ENCODE measurements at regions of chr5 and their contacts with region 1.

Region 1: GRCh38 chr5:143403593-143404415 is at the start of gene NR3C1:
- DNase-seq: peak; percentile 89
- ATAC-seq: peak; percentile 58
- H3K4me3 Mint-ChIP-seq: peak within 1 kb of the TSS; percentile 91
- H3K27ac Mint-ChIP-seq: peak within 1 kb of the TSS; percentile 97
- H3K4me1 Mint-ChIP-seq: peaks cover 41% of the 10 kb centered on the region
- H3K27me3 Mint-ChIP-seq: no peaks in the 10 kb centered on the region
- total RNA-seq, gene NR3C1: 47.1 to 53.9 TPM

Region 2: DNA sequence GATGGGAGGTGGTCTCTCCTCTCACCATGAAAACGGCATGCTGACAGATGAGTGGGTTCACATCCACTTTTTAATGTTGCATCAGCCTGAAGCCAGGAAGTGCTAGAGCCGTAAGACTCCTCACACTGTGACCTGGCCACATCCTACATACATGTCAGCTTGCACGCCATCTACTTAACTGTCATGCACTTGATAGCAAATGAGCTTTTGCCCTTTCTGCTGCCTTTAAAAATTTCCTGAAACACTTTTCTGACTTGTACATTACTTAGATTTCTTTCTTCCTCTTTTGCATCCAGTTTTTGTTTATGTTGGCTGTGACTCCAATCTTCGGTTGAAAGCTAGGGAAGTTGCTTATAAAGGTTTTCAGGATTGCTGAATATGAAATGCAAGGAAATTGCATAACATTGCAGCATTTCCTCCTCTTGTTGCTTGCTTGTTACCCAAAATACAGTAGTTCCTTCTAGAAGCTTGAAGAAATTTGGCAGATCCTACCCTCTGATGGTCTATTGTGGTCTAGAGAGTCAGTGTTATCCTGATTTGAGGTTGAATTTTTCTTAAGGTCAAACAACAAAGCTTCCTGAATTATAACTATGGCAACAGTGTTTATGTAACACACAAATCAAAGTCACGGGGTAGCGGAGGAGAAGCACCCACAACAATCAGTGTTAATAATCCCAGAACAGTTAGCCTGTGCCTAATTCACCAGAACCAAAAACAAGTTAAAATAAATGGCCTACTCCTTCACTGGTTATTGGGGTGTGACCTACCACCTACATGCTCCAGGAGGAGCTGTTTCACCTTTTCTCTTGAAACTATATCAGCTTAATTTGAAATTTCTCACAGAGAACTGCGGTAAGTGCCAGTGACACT is 401.1 kb before region 1 on chr5:
- CTCF ChIA-PET with region 1: interaction called, 8 read pairs
- POLR2A ChIA-PET with region 1: interaction called, 3 read pairs
- intact Hi-C with region 1: loop called (anchors 1 kb)
- DNase-seq: peak; percentile 78
- ATAC-seq: peak; percentile 92
- H3K4me3 Mint-ChIP-seq: peak overlapping the region; percentile 17
- H3K27ac Mint-ChIP-seq: peak overlapping the region; percentile 93
- H3K4me1 Mint-ChIP-seq: peaks cover 50% of the 10 kb centered on the region
- H3K27me3 Mint-ChIP-seq: no peaks in the 10 kb centered on the region

Region 3: GRCh38 chr5:143182901-143183820 is 220.6 kb before region 1 on chr5:
- CTCF ChIA-PET with region 1: interaction called, 3 read pairs
- POLR2A ChIA-PET with region 1: no interaction called
- intact Hi-C with region 1: loop called in 1 of 2 experiments (anchors 1 kb)
- DNase-seq: peak; percentile 84
- ATAC-seq: peak; percentile 79
- H3K4me3 Mint-ChIP-seq: peak overlapping the region; percentile 9
- H3K27ac Mint-ChIP-seq: peak overlapping the region; percentile 79
- H3K4me1 Mint-ChIP-seq: peaks cover 47% of the 10 kb centered on the region
- H3K27me3 Mint-ChIP-seq: no peaks in the 10 kb centered on the region

Region 4: DNA sequence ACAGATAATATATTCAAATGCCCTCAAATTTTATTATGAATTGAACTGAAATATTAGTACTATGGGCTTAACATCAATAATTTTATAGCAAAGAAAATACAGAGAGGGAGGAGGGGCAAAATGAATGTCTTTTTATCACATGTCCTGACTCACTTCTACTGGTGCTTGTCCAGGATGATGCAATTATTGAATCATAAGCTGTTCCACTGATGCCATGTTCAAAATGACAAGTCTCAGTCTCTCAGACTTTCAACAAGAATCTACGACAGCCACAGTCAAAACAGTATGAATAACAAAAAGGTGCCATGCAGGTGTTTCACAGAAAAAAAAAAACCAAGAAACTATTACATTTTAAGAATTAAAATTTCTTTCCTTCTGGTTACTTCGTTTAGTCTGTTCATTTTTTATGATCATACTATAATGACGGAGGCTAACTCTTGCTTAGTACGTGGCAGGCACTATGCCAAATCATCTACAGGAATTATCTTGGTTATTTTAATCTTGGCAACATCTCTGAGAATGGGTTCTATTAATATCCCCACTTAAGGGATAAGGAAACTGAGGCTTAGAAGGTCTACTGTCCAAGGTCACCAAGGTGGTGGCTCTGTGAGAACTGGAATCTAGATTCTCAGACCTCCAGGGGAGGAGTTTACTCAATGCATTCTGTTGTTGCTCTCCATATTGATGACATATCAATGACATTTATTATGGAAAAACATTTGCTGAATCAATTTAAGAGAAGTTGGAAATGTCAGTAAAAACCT is 61.8 kb before region 1 on chr5:
- CTCF ChIA-PET with region 1: interaction called, 3 read pairs
- POLR2A ChIA-PET with region 1: no interaction called
- intact Hi-C with region 1: loop called in 1 of 2 experiments (anchors 2 kb)
- DNase-seq: no peak
- ATAC-seq: peak; percentile 89
- H3K4me3 Mint-ChIP-seq: no peak overlapping the region
- H3K27ac Mint-ChIP-seq: peak overlapping the region; percentile 85
- H3K4me1 Mint-ChIP-seq: peaks cover 51% of the 10 kb centered on the region
- H3K27me3 Mint-ChIP-seq: no peaks in the 10 kb centered on the region

Region 5: DNA sequence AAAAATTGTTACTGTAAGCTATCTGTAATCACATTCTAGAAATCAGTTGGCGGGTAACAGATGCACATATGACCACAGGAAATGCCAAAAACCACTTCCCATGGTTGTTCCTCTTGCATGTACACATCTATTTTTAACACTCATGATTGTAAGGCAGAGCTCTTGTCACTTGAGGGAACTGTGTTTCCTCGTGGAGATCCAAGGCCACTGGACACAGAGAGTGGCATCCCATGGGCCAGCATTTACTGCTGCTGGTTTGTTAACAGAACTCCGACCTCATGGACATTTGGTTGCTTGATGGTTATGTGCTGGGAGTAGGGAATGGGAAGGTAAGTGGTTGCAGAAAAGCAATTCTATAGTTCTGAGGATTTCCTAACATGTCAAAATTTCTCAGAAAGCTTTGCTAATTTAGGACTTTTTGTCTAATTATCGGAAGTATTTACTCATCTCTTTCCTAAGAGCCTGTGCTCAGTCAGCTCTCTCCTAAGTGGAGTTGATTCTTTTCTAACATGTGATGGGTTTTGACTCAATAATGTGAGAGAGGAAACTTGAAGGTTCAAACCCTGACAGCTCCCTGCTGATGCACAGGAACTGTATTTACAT is 201.7 kb after region 1 on chr5:
- CTCF ChIA-PET with region 1: no interaction called
- POLR2A ChIA-PET with region 1: no interaction called
- intact Hi-C with region 1: loop called (anchors 1 to 5 kb)
- DNase-seq: peak; percentile 55
- ATAC-seq: peak; percentile 58
- H3K4me3 Mint-ChIP-seq: peak overlapping the region; percentile 34
- H3K27ac Mint-ChIP-seq: peak overlapping the region; percentile 91
- H3K4me1 Mint-ChIP-seq: peaks cover 35% of the 10 kb centered on the region
- H3K27me3 Mint-ChIP-seq: peaks cover 4% of the 10 kb centered on the region

Region 6: DNA sequence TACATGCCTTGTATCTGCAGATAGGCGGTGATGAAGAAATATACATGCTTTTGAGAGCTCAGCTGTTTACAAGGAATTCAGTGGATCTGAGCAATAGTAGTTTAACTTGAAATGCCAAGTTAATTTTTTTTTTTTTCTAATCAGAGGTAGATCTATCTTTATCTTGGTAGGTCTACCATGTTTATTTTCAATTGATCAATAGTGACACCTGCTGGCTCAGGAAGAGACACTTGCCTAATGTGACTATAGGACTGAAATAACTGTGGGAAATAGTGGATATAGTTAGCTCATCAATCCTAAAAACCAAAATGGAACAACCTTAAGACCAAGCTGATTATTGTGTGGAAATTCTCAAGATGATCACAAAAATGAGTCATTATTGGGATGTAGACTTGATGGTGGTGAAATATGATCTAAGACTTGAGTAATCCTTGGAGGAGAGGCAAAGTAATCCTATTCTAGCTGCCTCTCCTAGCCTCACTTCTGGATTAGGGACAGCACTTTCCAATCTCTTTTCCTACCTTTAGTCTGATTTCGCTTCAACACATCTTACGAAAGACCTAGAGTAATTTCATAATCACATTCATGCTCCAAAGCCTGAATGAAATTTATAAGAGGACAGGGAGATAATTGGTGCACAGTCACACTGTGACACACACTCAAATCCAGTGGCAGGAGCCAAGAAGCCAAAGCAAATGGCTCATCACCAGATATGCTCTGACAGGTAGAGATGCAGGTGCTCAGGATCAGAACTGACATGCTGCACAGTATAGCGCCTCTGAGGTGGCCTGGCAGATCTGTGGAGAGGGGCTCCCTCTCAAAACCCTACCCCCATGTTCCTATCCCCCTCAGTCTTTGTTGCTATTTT is 564.4 kb after region 1 on chr5:
- CTCF ChIA-PET with region 1: no interaction called
- POLR2A ChIA-PET with region 1: no interaction called
- intact Hi-C with region 1: loop called in 1 of 2 experiments (anchors 5 kb)
- DNase-seq: peak; percentile 8
- ATAC-seq: peak; percentile 80
- H3K4me3 Mint-ChIP-seq: no peak overlapping the region
- H3K27ac Mint-ChIP-seq: no peak overlapping the region
- H3K4me1 Mint-ChIP-seq: no peaks in the 10 kb centered on the region
- H3K27me3 Mint-ChIP-seq: no peaks in the 10 kb centered on the region